ENCODE measurements at regions of chr10 and their contacts with region 1.

Region 1: GRCh38 chr10:132023092-132023811 is 41.5 kb upstream of the BNIP3 start:
- DNase-seq: peak; percentile 79
- H3K4me3 ChIP-seq: peak overlapping the region in 1 of 3 experiments; percentile 3
- H3K27ac ChIP-seq: no peak overlapping the region
- H3K4me1 ChIP-seq: no peaks in the 10 kb centered on the region
- H3K27me3 ChIP-seq: peaks cover 2 to 6% of the 10 kb centered on the region in 2 experiments
- CTCF ChIP-seq: peak; percentile 87
- POLR2A ChIP-seq: no peak

Region 2: GRCh38 chr10:131885391-131886161 is 137.7 kb before region 1 on chr10:
- CTCF ChIA-PET with region 1: interaction called, 384 read pairs
- POLR2A ChIA-PET with region 1: no interaction called
- dilution Hi-C with region 1: no loop called
- intact Hi-C with region 1: loop called (anchors 1 kb)
- DNase-seq: peak; percentile 65
- H3K4me3 ChIP-seq: no peak overlapping the region
- H3K27ac ChIP-seq: no peak overlapping the region
- H3K4me1 ChIP-seq: no peaks in the 10 kb centered on the region
- H3K27me3 ChIP-seq: no peaks in the 10 kb centered on the region
- CTCF ChIP-seq: peak; percentile 97 to 99
- POLR2A ChIP-seq: no peak

Region 3: GRCh38 chr10:131909014-131909808 is 114.0 kb before region 1 on chr10:
- CTCF ChIA-PET with region 1: interaction called, 38 read pairs
- POLR2A ChIA-PET with region 1: no interaction called
- dilution Hi-C with region 1: no loop called
- intact Hi-C with region 1: no loop called
- DNase-seq: no peak
- H3K4me3 ChIP-seq: no peak overlapping the region
- H3K27ac ChIP-seq: no peak overlapping the region
- H3K4me1 ChIP-seq: no peaks in the 10 kb centered on the region
- H3K27me3 ChIP-seq: no peaks in the 10 kb centered on the region
- CTCF ChIP-seq: no peak
- POLR2A ChIP-seq: no peak

Region 4: DNA sequence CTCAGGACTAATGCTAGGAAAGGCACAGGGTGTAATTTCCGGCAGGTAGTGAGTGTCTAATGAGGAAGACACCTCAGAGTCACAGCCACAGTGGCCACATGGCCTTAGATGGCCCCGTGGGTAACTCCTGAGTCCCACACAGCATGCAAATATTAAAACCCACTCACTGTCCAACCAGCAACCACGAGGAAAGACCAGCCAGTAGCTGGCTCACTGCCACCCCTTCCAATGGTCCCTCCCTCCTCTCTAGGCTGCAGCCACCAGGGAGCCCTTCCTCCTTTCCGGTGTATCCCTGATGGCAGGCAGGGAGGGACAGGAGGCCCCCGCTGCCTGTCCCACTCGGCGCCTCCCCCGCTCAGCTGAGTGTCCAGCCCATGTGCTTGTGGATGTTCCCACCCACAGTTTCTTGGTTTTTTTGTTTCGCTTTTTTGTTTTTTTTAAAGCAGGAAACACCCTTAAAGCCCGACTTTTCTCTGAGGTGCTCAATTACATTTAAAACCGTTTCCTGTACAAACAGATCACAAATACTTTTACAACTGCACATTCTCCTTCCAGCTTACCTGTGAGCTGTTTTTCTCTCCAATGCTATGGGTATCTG is 50.7 kb before region 1 on chr10:
- CTCF ChIA-PET with region 1: interaction called, 33 read pairs
- POLR2A ChIA-PET with region 1: no interaction called
- dilution Hi-C with region 1: no loop called
- intact Hi-C with region 1: loop called (anchors 1 kb)
- DNase-seq: peak; percentile 46
- H3K4me3 ChIP-seq: no peak overlapping the region
- H3K27ac ChIP-seq: no peak overlapping the region
- H3K4me1 ChIP-seq: peaks cover 11% of the 10 kb centered on the region
- H3K27me3 ChIP-seq: no peaks in the 10 kb centered on the region
- CTCF ChIP-seq: no peak
- POLR2A ChIP-seq: no peak

Region 5: GRCh38 chr10:131997366-131998049 is 25.7 kb before region 1 on chr10:
- CTCF ChIA-PET with region 1: interaction called, 51 read pairs
- POLR2A ChIA-PET with region 1: no interaction called
- dilution Hi-C with region 1: no loop called
- intact Hi-C with region 1: no loop called
- DNase-seq: peak; percentile 75
- H3K4me3 ChIP-seq: peak overlapping the region in 1 of 3 experiments; percentile 13
- H3K27ac ChIP-seq: no peak overlapping the region
- H3K4me1 ChIP-seq: peaks cover 7% of the 10 kb centered on the region
- H3K27me3 ChIP-seq: peaks cover 0 to 2% of the 10 kb centered on the region in 2 experiments
- CTCF ChIP-seq: no peak
- POLR2A ChIP-seq: no peak

Region 6: DNA sequence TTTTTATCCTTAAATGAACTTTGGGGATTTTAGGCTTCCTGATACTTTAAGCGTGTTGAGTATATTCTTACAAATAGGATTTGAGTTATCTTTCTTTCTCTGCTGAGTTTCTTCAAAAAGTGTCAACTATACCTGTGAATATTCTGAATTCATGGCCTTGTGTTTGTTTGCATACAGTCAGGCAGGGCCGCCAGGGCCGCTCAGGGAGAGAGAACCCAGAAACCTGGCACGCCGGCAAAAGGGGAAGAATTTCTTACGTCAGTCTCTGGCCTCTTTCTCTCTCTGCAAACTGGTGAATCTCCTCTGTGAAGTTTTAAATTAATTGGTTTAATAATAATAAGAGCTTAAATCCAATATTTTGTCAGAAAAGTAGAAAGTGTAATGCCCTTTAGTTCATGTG is 12.2 kb before region 1 on chr10:
- CTCF ChIA-PET with region 1: interaction called, 21 read pairs
- POLR2A ChIA-PET with region 1: no interaction called
- dilution Hi-C with region 1: no loop called
- intact Hi-C with region 1: no loop called
- DNase-seq: no peak
- H3K4me3 ChIP-seq: no peak overlapping the region
- H3K27ac ChIP-seq: no peak overlapping the region
- H3K4me1 ChIP-seq: no peaks in the 10 kb centered on the region
- H3K27me3 ChIP-seq: peaks cover 11 to 16% of the 10 kb centered on the region in 2 experiments
- CTCF ChIP-seq: no peak
- POLR2A ChIP-seq: no peak

Region 7: GRCh38 chr10:132142411-132143161 is 119.3 kb after region 1 on chr10:
- CTCF ChIA-PET with region 1: interaction called, 10 read pairs
- POLR2A ChIA-PET with region 1: no interaction called
- dilution Hi-C with region 1: no loop called
- intact Hi-C with region 1: no loop called
- DNase-seq: no peak
- H3K4me3 ChIP-seq: no peak overlapping the region
- H3K27ac ChIP-seq: no peak overlapping the region
- H3K4me1 ChIP-seq: no peaks in the 10 kb centered on the region
- H3K27me3 ChIP-seq: peaks cover 0 to 2% of the 10 kb centered on the region in 2 experiments
- CTCF ChIP-seq: peak; percentile 57 to 80
- POLR2A ChIP-seq: no peak

Measured in endothelial cell of umbilical vein (primary cell).